MCF 10A (cell line): ENCODE measurements at regions of chr9 and their contacts with region 1.

Region 1: DNA sequence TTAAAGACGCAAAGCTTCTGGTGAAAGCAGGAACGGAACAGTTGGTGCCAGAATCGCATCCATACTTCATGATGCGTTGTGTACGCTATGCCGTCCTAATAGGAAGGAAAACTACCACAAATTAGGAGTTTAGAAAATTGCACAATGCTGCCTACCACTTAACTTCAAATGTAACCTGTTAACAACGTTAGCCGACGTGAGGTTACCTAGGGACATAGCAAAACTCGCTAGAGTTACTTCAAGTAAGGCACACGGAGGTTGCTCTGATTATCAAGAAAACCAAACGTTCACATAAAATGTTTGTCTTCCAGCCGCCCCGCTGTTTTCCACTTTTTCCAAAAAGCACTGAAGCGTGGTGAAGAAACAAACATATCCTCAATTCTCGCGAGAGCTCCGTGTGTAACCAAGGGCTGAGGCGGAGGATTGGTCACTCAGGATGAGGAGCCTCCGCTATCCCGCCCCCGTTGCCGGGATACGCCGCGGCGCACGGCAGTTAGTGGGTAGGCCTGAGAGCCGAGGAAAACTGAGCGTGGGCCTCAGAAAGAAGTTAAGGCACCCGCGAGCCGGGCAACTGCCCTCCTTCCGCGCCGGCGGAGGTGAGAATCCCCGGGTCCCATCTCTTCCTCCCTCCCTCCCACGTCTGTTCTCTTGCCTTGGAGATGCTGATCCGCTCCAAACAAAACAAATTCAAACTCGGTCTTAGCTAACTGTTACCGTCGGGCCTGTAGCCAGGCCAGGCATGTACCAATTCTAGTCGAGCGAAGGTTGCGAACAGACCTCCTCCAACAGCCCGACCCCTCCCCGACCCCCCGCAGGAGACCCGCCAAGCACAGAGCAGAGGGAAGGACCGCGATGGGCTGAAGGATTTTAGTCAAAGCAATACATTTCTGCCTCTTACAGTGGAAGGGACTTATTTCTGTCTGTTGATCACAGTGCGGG is at the start of gene IFT74:
- DNase-seq: peak; percentile 99
- H3K4me3 Mint-ChIP-seq: peak within 1 kb of the TSS; percentile 90
- H3K27ac Mint-ChIP-seq: peak within 1 kb of the TSS; percentile 100
- H3K4me1 Mint-ChIP-seq: peaks cover 14% of the 10 kb centered on the region
- H3K27me3 Mint-ChIP-seq: no peaks in the 10 kb centered on the region
- CTCF ChIP-seq: no peak
- total RNA-seq, gene IFT74: 28.7 and 31.5 TPM in 2 replicates

Region 2: DNA sequence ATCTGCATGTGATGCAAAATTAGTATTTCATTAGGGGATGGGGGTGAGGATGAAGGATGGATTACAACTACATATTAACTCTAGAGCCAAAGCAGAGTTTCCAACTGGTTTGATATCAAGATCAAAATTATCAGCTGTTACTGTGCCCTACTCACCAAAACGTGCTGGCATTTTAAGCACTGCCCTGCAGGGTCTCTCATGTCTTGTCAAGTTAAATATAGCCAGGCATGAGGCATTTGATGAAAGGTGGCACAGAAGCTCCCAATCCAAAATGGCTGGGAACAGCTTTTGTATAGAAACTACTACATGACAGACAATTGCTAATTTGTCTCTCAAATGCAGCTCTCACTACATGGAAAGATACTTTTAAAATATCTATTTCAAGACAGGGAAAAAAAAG is 36.5 kb before region 1 on chr9:
- CTCF ChIA-PET with region 1: no interaction called
- POLR2A ChIA-PET with region 1: no interaction called
- intact Hi-C with region 1: no loop called
- DNase-seq: no peak
- H3K4me3 Mint-ChIP-seq: no peak overlapping the region
- H3K27ac Mint-ChIP-seq: no peak overlapping the region
- H3K4me1 Mint-ChIP-seq: no peaks in the 10 kb centered on the region
- H3K27me3 Mint-ChIP-seq: no peaks in the 10 kb centered on the region
- CTCF ChIP-seq: no peak

Region 3: DNA sequence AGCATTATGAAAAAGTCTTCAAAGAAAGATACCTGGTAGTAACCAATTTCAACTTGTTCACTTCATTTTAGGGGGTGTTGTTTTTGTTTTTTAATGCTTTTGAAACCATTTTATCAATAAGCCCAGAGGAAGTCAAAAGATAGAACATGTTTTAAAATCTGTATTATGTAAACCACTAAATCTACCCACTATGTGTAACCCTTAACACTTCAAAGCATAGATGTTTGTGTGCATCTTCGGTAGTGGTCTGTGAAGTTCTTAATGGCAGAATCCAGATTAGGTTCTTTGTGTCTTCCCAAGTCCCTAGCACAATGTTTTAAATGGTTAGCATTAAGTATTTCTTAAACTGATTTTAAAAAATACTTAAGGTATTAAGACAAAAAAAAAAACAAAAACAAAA is 15.4 kb before region 1 on chr9:
- CTCF ChIA-PET with region 1: interaction called, 3 read pairs
- POLR2A ChIA-PET with region 1: interaction called, 27 read pairs
- intact Hi-C with region 1: no loop called
- DNase-seq: no peak
- H3K4me3 Mint-ChIP-seq: no peak overlapping the region
- H3K27ac Mint-ChIP-seq: no peak overlapping the region
- H3K4me1 Mint-ChIP-seq: peaks cover 35% of the 10 kb centered on the region
- H3K27me3 Mint-ChIP-seq: no peaks in the 10 kb centered on the region
- CTCF ChIP-seq: no peak

Region 4: GRCh38 chr9:26975693-26976059 is 19.5 kb after region 1 on chr9:
- CTCF ChIA-PET with region 1: interaction called, 9 read pairs
- POLR2A ChIA-PET with region 1: interaction called, 17 read pairs
- intact Hi-C with region 1: no loop called
- DNase-seq: peak; percentile 70
- H3K4me3 Mint-ChIP-seq: no peak overlapping the region
- H3K27ac Mint-ChIP-seq: peak overlapping the region; percentile 94
- H3K4me1 Mint-ChIP-seq: peaks cover 13% of the 10 kb centered on the region
- H3K27me3 Mint-ChIP-seq: no peaks in the 10 kb centered on the region
- CTCF ChIP-seq: peak; percentile 32